ENCODE measurements at regions of chr6 and their contacts with region 1.

Region 1: GRCh38 chr6:11700118-11700718 is 78.4 kb downstream of the ADTRP start:
- DNase-seq: peak; percentile 36
- H3K4me3 ChIP-seq: no peak overlapping the region
- H3K27ac ChIP-seq: no peak overlapping the region
- H3K4me1 ChIP-seq: no peaks in the 10 kb centered on the region
- H3K27me3 ChIP-seq: no peaks in the 10 kb centered on the region
- CTCF ChIP-seq: peak; percentile 45 to 63 (median 56)
- POLR2A ChIP-seq: no peak

Region 2: GRCh38 chr6:11460001-11460668 is 240.1 kb before region 1 on chr6:
- intact Hi-C with region 1: no loop called
- DNase-seq: no peak
- H3K4me3 ChIP-seq: no peak overlapping the region
- H3K27ac ChIP-seq: no peak overlapping the region
- H3K4me1 ChIP-seq: no peaks in the 10 kb centered on the region
- H3K27me3 ChIP-seq: no peaks in the 10 kb centered on the region
- CTCF ChIP-seq: no peak
- POLR2A ChIP-seq: no peak

Region 3: DNA sequence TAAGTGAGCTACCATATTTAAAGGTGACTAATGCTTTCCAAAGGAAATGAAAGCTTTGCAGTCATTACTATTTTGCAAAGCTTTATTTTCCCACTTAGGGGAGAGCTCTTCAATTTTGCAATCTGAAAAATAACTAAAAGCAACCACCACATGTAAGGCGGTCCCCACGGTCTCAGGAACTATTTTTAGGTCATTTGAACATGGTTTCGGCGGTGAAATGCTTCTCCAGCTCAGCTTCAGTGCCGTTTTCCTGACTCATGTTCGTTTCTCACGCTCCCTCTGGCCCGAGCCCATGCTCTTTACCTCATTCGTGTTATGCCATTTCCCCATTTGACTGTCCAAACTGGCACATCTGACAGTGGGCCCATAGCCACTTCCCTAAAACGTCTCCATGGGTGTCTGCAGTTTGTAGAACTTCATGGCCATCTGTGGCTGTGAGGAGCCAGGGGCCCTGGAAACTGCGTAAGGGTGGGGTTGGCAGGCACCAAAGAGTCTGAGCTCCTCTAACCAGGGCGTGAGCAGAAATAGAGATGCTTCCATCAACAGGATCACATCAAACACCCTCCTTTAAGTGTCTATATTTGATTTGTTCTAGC is 31.9 kb after region 1 on chr6:
- intact Hi-C with region 1: no loop called
- DNase-seq: no peak
- H3K4me3 ChIP-seq: no peak overlapping the region
- H3K27ac ChIP-seq: no peak overlapping the region
- H3K4me1 ChIP-seq: peaks cover 3% of the 10 kb centered on the region
- H3K27me3 ChIP-seq: no peaks in the 10 kb centered on the region
- CTCF ChIP-seq: no peak
- POLR2A ChIP-seq: no peak

Region 4: DNA sequence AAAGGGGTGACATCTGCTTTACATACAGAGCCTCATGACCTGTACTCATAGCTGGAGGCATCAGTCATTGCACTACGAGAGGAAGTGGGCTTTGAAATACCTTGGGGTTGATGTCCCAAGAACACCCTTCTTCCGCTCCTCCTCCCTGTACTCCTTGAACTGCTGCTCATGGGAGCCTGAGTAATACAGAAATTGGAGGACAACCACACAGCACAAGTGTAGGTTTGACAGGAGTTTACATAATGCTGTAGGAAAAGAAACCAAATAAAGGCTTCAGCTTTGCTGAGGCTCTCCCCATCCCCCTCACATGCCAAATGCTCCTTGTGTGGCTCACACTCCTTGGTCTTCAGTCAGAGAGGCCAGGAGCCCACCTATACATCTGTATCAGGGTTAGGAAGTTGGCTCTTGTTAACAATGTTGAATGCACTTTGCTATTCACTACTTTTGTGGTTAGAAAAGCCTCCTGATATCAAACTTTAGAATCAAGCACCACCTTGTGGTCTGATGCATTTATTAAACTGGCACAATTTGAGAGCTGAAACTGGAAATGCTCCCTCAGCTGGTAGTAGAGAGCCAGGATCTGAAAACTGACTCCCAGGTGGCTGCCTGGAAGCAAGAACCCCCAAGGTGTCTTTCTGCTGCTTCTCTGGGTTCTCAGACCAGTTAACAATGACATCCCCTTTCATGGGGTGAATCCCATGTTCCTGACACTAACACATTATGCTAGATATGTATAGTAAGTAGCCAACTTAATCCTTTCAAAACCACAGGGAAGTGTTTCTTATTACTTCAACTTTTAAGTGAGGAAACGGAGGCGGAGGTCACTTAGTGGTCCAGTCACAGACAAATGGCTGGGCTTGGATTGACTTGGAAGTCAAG is 533.7 kb after region 1 on chr6:
- intact Hi-C with region 1: loop called (anchors 10 kb)
- DNase-seq: peak; percentile 71
- H3K4me3 ChIP-seq: no peak overlapping the region
- H3K27ac ChIP-seq: no peak overlapping the region
- H3K4me1 ChIP-seq: no peaks in the 10 kb centered on the region
- H3K27me3 ChIP-seq: no peaks in the 10 kb centered on the region
- CTCF ChIP-seq: peak; percentile 40 to 93 (median 86)
- POLR2A ChIP-seq: no peak

Measured in prostate gland (tissue), 2 donors.